ENCODE measurements at regions of chr12 and their contacts with region 1.

Region 1: DNA sequence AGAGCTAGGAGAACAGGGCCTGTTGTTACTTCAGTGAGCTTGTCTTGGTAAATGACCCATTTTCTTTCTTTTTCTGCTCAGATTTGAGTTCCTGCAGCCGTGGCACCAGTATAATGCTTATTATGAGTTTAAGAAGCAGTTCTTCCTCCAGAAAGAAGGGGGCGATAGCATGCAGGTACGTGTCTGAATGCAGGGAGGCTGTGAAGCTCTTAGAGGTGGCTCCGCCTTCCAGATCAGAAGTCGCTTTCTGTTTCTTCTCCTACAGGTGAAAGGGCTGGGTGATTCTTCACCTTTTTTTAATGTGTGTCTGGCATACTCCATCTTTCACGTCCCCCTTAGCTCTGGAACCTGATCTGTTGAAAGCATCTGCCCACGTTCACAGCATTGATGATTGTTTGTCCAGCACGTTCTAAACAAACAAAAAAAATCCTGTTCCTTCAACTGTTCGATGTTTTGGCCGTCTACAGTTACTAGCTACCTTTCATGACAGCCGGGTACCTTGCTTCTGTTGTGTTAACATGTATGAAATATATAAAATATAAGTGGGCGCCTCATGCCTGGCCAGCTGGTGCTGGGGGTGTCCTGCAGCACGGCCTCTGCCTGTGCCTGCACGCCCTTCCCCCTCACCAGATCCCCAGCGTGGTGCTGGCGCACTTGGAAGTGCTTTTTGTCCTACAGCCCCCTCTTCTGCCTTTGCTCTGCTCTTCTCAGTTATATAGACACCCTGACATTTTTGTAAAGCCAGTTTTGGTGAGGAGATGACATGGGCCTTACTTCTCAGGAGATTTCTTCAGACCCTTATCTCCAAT is 44.6 kb downstream of the SFSWAP start:
- DNase-seq: no peak
- ATAC-seq: no peak
- H3K4me3 ChIP-seq: no peak overlapping the region
- H3K27ac ChIP-seq: no peak overlapping the region
- H3K4me1 ChIP-seq: no peaks in the 10 kb centered on the region
- H3K27me3 ChIP-seq: no peaks in the 10 kb centered on the region
- CTCF ChIP-seq: peak; percentile 8

Region 2: GRCh38 chr12:130214686-130215370 is 1540.7 kb before region 1 on chr12:
- intact Hi-C with region 1: no loop called
- DNase-seq: no peak
- ATAC-seq: no peak
- H3K4me3 ChIP-seq: no peak overlapping the region
- H3K27ac ChIP-seq: no peak overlapping the region
- H3K4me1 ChIP-seq: no peaks in the 10 kb centered on the region
- H3K27me3 ChIP-seq: peaks cover 0 to 2% (median 0%) of the 10 kb centered on the region in 3 donors
- CTCF ChIP-seq: no peak

Region 3: DNA sequence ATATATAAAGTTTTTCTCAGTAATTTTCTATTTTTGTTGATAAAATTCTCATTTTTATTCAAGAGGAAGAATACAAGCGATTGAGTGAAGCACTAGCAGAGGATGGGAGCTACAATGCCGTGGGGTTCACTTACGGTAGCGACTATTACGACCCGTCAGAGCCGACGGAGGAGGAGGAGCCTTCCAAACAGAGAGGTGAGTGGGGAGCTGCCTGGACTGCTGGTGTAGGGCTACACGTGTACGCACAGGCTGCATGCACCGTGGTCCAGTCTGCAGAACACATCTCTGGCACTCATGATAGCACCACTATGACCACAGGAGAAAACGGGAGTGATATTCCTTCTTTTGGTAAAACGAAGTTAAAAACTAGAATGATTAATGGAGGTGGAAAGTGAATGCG is 40.8 kb before region 1 on chr12:
- intact Hi-C with region 1: loop called in 1 of 2 experiments (anchors 5 kb)
- DNase-seq: no peak
- ATAC-seq: no peak
- H3K4me3 ChIP-seq: no peak overlapping the region
- H3K27ac ChIP-seq: no peak overlapping the region
- H3K4me1 ChIP-seq: peaks cover 12% of the 10 kb centered on the region
- H3K27me3 ChIP-seq: no peaks in the 10 kb centered on the region
- CTCF ChIP-seq: no peak